ENCODE measurements at regions of chr11 and their contacts with region 1.

Region 1: DNA sequence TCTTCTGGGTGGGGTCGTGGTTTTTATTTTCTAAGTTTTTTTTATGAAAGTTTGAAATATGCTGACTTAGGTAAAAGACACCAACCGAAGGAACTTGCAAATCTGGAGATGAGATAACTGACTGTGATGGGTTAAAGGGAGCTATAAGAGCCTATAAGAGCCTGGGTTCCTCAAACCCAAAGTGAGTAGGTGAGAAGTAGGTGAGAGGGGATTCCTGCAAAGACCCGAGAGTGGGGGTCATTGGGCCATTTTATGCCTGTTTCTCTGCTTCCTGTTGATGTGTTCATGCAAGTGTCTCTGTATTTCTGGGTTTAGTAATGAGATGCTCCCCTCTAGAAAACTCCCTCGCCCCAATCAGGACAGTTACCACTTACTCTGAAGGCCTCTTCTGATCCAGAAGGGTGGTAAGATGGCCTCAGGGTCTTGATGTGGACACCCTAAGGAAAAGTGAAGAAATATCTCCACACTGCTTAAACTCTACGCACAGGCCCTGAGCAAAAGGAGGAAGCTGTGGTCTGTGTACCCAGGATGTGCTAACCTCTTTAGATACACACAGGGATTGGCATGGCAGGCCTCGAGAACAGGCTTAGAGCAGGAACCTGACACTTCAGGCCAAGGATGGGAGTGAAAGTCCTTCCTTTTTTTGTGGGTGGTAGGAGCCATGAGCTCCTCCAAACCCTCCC is 1.8 kb downstream of the FLI1 start:
- DNase-seq: no peak
- H3K4me3 ChIP-seq: peak overlapping the region; percentile 56 to 94 (median 92)
- H3K27ac ChIP-seq: peak overlapping the region; percentile 98
- H3K4me1 ChIP-seq: peaks cover 66% of the 10 kb centered on the region
- H3K27me3 ChIP-seq: no peaks in the 10 kb centered on the region
- CTCF ChIP-seq: no peak
- POLR2A ChIP-seq: peak; percentile 35

Region 2: DNA sequence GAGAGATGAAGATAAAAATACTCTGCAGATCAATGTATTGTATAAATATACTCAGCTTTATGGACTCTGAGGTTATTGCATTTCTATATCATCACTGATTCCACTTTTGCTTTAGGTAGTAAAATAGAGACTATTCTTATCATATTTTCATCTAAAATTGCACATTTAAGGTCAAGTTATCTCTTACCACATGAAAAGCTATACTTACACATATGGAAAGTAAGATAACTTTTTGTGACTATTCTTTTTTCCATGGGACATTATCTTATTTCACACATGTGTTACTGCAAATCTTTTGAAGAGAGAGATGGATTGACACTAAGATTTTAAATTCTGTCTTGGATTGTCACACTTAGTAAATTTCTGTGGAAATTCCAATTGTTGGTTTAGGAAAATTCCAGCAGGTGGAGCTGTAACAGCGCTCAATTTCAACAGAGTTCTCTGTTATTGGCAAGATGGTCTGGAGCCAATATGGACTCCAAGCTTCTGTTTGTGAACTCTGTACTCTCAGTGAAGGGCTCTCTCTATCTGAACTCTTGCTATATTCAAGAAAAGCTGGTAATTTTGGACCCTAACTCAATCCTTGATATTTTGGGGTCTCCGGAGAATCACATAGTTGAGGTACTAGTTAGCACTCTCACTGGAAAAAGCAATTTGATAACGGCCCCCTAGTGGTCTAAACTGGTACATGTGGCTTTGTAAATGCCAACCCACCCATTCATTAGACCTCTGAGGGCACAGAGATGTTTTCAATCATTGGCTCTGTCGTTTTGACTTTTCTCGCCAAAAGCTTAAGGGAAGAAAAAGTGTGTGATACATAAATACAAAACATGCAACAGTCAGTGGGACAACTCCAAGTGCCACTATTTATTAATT is 538.0 kb before region 1 on chr11:
- CTCF ChIA-PET with region 1: interaction called, 4 read pairs
- POLR2A ChIA-PET with region 1: no interaction called
- dilution Hi-C with region 1: no loop called
- intact Hi-C with region 1: loop called (anchors 2 kb)
- DNase-seq: peak; percentile 87
- H3K4me3 ChIP-seq: peak overlapping the region in 1 of 3 experiments; percentile 48
- H3K27ac ChIP-seq: peak overlapping the region; percentile 75
- H3K4me1 ChIP-seq: peaks cover 16% of the 10 kb centered on the region
- H3K27me3 ChIP-seq: no peaks in the 10 kb centered on the region
- CTCF ChIP-seq: peak; percentile 66 to 86
- POLR2A ChIP-seq: no peak

Region 3: GRCh38 chr11:128290106-128290840 is 405.4 kb before region 1 on chr11:
- CTCF ChIA-PET with region 1: no interaction called
- POLR2A ChIA-PET with region 1: no interaction called
- dilution Hi-C with region 1: no loop called
- intact Hi-C with region 1: loop called (anchors 1 kb)
- DNase-seq: peak; percentile 77
- H3K4me3 ChIP-seq: no peak overlapping the region
- H3K27ac ChIP-seq: no peak overlapping the region
- H3K4me1 ChIP-seq: no peaks in the 10 kb centered on the region
- H3K27me3 ChIP-seq: no peaks in the 10 kb centered on the region
- CTCF ChIP-seq: peak; percentile 71 to 72
- POLR2A ChIP-seq: no peak

Region 4: GRCh38 chr11:128365044-128365443 is 330.6 kb before region 1 on chr11:
- CTCF ChIA-PET with region 1: no interaction called
- POLR2A ChIA-PET with region 1: no interaction called
- dilution Hi-C with region 1: no loop called
- intact Hi-C with region 1: no loop called
- DNase-seq: peak; percentile 55
- H3K4me3 ChIP-seq: no peak overlapping the region
- H3K27ac ChIP-seq: no peak overlapping the region
- H3K4me1 ChIP-seq: peaks cover 3% of the 10 kb centered on the region
- H3K27me3 ChIP-seq: no peaks in the 10 kb centered on the region
- CTCF ChIP-seq: no peak
- POLR2A ChIP-seq: no peak

Region 5: DNA sequence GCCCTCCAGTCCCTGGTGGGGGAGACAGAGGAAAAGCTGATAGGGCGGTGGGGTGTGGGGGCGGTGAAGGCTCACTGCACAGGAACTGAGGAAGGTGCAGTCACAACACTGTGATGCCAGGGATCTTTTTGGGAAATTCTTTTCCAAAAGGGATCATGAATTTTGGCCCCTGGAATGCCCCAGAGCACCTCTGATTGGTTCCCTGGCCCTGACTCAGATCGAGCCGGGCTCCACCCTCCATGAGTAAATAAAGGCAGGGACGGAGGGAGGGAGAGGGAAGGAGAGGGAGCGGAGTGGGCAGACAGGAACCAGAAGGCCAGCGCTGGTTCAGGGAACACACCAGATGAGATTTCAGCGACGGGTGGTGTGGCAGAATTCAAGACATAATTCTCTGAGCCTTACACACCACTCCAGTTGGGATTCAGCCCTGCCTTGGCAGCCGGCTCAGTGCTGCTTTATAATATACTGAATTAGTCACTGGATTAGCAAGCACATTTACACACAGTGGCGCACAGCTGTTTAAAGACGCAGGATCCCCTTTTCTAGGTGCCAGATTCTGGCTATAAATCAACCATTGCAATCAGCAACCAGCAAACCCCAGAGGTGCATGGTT is 188.6 kb before region 1 on chr11:
- CTCF ChIA-PET with region 1: no interaction called
- POLR2A ChIA-PET with region 1: no interaction called
- dilution Hi-C with region 1: no loop called
- intact Hi-C with region 1: loop called (anchors 5 kb)
- DNase-seq: peak; percentile 88
- H3K4me3 ChIP-seq: peak overlapping the region in 1 of 3 experiments; percentile 12
- H3K27ac ChIP-seq: peak overlapping the region; percentile 89
- H3K4me1 ChIP-seq: peaks cover 66% of the 10 kb centered on the region
- H3K27me3 ChIP-seq: no peaks in the 10 kb centered on the region
- CTCF ChIP-seq: no peak
- POLR2A ChIP-seq: peak; percentile 57

Region 6: GRCh38 chr11:128709402-128709801 is 13.7 kb after region 1 on chr11:
- CTCF ChIA-PET with region 1: interaction called, 10 read pairs
- POLR2A ChIA-PET with region 1: interaction called, 26 read pairs
- dilution Hi-C with region 1: no loop called
- intact Hi-C with region 1: loop called (anchors 1 kb)
- DNase-seq: peak; percentile 99
- H3K4me3 ChIP-seq: no peak overlapping the region
- H3K27ac ChIP-seq: peak overlapping the region; percentile 97
- H3K4me1 ChIP-seq: peaks cover 88% of the 10 kb centered on the region
- H3K27me3 ChIP-seq: no peaks in the 10 kb centered on the region
- CTCF ChIP-seq: peak in 1 of 2 donors; percentile 5
- POLR2A ChIP-seq: peak; percentile 85

Region 7: DNA sequence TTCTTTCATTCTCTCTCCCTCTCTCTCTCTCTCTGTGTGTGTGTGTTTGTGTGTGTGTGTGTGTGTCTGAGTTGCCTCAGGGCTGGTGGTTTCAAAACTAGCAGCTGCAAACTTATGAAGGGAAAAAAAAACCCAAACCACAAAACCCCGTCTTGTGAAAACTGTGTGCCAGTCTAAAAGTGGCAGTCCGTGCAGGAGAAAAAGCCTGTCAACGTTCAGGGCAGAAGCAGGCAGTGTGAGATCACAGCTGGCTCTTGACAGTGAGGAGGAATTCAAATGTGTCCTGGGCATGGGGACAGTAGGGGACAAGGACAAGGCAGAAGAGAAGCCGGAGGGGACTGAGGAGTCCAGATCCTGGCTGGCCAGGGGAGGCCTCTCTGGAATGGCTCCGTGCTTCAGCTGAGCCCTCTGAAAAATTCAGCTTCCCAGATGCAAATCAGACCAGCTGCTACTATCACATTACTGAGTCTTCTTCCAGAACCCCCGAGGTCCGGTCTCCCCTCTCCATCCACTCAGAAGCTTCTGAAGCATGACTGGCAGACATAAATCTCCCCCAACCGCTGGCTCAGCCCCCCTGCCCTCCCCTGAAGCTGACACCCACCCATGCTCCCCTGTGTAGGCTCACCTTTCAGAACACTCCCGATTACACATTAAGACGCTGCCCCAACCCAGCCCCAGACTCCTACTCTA is 30.1 kb after region 1 on chr11:
- CTCF ChIA-PET with region 1: no interaction called
- POLR2A ChIA-PET with region 1: interaction called, 18 read pairs
- dilution Hi-C with region 1: no loop called
- intact Hi-C with region 1: no loop called
- DNase-seq: no peak
- H3K4me3 ChIP-seq: no peak overlapping the region
- H3K27ac ChIP-seq: no peak overlapping the region
- H3K4me1 ChIP-seq: peaks cover 56% of the 10 kb centered on the region
- H3K27me3 ChIP-seq: no peaks in the 10 kb centered on the region
- CTCF ChIP-seq: no peak
- POLR2A ChIP-seq: no peak

Measured in endothelial cell of umbilical vein (primary cell).